ENCODE measurements at regions of chr10 and their contacts with region 1.

Region 1: DNA sequence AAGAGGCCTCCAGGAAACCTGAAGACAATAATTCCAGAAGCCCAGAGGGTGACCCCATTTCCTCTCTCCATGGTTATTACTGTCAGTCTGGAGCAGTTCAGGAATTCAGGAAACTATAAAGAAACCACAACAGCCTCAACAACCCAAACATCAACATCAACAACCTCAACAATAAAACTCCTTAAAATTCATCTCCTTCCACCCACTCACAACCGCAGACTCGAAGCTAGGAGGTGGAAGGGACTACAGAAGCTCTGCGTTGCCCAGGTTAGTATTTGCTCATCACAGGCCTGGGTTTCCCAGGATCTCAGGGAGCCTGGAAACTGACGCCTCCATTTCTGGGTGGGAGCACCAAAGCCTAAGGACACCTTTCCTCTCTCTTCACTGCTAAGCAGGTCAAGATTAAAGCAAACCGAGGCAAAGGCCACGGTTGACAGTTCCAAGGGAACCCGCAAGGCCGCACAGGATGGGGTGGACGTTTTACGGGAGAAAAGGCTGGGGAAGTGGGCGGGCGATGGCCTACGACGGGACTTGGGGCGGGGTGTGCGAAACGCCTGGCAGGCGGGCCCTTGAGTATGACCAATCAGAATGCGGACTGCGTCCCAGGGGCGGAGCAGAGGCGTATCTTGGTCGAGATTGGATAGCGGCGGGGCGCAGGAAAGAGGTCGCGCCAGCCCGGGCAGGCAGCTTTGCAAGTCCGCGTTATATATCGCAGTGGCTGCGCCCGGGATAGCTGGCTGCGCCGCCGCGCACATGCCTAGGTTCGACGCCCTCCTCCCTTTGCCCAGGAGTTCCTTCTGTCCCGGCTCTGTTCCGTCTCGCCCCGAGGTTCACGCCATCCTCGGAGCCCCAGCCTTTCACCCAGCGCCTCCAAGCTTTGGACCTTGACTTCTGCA is at the start of gene ELOVL3:
- DNase-seq: peak; percentile 87
- H3K4me3 Mint-ChIP-seq: peak within 1 kb of the TSS; percentile 63
- H3K27ac Mint-ChIP-seq: no peak within 1 kb of the TSS
- H3K4me1 Mint-ChIP-seq: peaks cover 21% of the 10 kb centered on the region
- H3K27me3 Mint-ChIP-seq: peaks cover 57% of the 10 kb centered on the region
- total RNA-seq, gene ELOVL3: 0.18 TPM in 1 of 2 replicates, not detected in the other

Region 2: DNA sequence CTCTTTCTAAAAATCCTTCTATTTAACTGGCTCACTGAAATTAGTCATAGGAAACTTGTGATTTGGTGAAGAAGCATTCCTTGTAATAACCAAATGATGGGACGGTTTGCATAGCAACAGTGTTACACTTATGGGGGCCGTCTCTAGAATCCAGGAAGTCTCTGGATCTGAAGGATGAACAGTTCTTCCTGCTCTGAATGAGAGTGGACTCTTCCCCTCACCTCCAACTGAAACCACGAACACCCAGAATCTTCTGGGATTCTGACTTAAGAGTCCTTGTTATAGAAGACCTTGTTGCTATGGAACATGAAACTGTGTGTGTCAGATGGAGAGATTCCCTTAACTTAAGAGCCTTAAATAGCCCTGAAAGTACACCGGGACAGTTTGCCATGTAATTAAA is 50.5 kb before region 1 on chr10:
- intact Hi-C with region 1: no loop called
- DNase-seq: no peak
- H3K4me3 Mint-ChIP-seq: no peak overlapping the region
- H3K27ac Mint-ChIP-seq: no peak overlapping the region
- H3K4me1 Mint-ChIP-seq: no peaks in the 10 kb centered on the region
- H3K27me3 Mint-ChIP-seq: peaks cover 8% of the 10 kb centered on the region

Region 3: DNA sequence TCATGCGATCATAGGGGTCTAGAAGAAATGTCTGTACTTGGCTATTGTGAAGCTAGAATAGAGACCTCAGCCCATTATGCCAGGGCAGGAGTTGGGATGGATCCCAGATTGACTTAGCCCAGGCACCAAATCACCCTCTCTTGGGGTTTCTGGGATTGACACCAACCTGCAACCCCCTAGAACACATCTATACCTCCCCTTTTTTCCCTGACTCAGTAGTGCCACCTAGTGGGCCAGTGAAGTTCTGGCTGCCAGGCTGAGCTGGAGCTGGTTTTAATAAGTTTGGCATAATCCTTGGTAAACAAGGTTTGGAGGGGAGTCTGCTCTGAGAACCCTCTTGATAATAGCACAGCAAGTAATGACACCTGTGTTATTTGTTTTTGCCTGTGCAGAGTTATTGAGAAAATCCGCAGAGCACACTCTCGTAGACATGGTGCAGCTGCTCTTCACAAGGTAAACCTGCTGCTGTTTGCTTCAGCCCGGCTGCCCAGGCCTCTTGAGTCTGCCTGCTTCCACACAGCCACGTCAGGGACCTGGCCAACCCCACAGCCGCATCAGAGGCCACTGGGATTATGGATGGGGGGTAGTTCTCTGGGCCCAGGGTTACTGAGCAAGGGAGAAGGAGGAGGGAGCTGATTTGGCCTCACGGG is 126.3 kb after region 1 on chr10:
- intact Hi-C with region 1: loop called (anchors 1 kb)
- DNase-seq: peak; percentile 41
- H3K4me3 Mint-ChIP-seq: no peak overlapping the region
- H3K27ac Mint-ChIP-seq: no peak overlapping the region
- H3K4me1 Mint-ChIP-seq: no peaks in the 10 kb centered on the region
- H3K27me3 Mint-ChIP-seq: no peaks in the 10 kb centered on the region

Region 4: GRCh38 chr10:102399217-102400089 is 173.6 kb after region 1 on chr10:
- intact Hi-C with region 1: loop called (anchors 1 kb)
- DNase-seq: peak; percentile 86
- H3K4me3 Mint-ChIP-seq: peak overlapping the region; percentile 90
- H3K27ac Mint-ChIP-seq: peak overlapping the region; percentile 63
- H3K4me1 Mint-ChIP-seq: peaks cover 42% of the 10 kb centered on the region
- H3K27me3 Mint-ChIP-seq: no peaks in the 10 kb centered on the region

Region 5: GRCh38 chr10:102583435-102584417 is 357.8 kb after region 1 on chr10:
- intact Hi-C with region 1: loop called (anchors 1 kb)
- DNase-seq: peak; percentile 73
- H3K4me3 Mint-ChIP-seq: no peak overlapping the region
- H3K27ac Mint-ChIP-seq: no peak overlapping the region
- H3K4me1 Mint-ChIP-seq: peaks cover 16% of the 10 kb centered on the region
- H3K27me3 Mint-ChIP-seq: peaks cover 2% of the 10 kb centered on the region